ENCODE measurements at regions of chr13 and their contacts with region 1.

Region 1: DNA sequence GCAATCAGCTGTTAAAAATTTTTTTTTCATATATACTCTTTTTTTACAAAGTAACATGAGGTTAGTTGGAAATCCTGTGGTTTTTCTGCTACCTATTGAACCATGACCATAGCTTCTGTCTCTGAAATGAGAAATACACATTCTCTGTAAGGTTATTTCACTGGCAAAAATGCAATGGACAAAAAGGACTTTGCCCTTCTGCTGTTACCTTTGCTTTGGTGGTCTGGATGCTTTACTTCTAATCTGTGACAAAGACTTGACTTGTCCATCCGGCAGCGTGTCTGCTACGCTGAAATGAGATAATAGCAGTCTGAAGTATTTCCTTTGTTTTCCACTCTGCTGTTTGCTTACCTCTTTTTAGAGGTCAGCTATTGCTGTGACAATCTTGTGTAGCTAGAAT is 412.8 kb downstream of the SLITRK6 start:
- DNase-seq: peak; percentile 44
- H3K4me3 ChIP-seq: peak overlapping the region; percentile 26
- H3K27ac ChIP-seq: peak overlapping the region; percentile 58
- H3K4me1 ChIP-seq: peaks cover 59% of the 10 kb centered on the region
- CTCF ChIP-seq: no peak

Region 2: GRCh38 chr13:84934911-84935310 is 451.5 kb before region 1 on chr13:
- CTCF ChIA-PET with region 1: no interaction called
- POLR2A ChIA-PET with region 1: no interaction called
- intact Hi-C with region 1: loop called (anchors 10 kb)
- DNase-seq: peak; percentile 29
- H3K4me3 ChIP-seq: peak overlapping the region; percentile 66
- H3K27ac ChIP-seq: no peak overlapping the region
- H3K4me1 ChIP-seq: peaks cover 35% of the 10 kb centered on the region
- CTCF ChIP-seq: no peak

Region 3: GRCh38 chr13:84983321-84983720 is 403.1 kb before region 1 on chr13:
- CTCF ChIA-PET with region 1: no interaction called
- POLR2A ChIA-PET with region 1: no interaction called
- intact Hi-C with region 1: loop called (anchors 5 kb)
- DNase-seq: no peak
- H3K4me3 ChIP-seq: no peak overlapping the region
- H3K27ac ChIP-seq: no peak overlapping the region
- H3K4me1 ChIP-seq: peaks cover 39% of the 10 kb centered on the region
- CTCF ChIP-seq: peak; percentile 54

Region 4: DNA sequence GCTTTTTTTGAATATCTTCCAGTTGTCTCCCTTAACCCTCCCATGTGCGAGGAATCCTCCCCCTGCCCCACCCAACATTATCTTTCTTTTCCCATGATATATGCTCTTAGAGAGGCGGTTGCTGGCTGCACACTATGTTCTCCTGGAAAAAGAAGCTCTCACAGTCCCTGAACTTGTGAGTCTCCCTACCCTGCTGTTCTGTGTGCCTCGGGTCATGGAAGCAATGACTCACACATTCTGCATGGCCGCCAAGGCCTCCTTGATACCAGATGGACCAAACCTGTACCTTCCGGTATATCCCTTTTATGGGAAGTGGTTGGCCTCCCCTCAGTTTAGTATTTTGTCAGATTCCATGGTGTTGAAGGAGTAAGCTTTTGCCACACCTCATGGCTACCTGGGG is 292.6 kb before region 1 on chr13:
- CTCF ChIA-PET with region 1: no interaction called
- POLR2A ChIA-PET with region 1: no interaction called
- intact Hi-C with region 1: no loop called
- DNase-seq: no peak
- H3K4me3 ChIP-seq: no peak overlapping the region
- H3K27ac ChIP-seq: no peak overlapping the region
- H3K4me1 ChIP-seq: no peaks in the 10 kb centered on the region
- CTCF ChIP-seq: no peak

Region 5: GRCh38 chr13:85197431-85197830 is 189.0 kb before region 1 on chr13:
- CTCF ChIA-PET with region 1: no interaction called
- POLR2A ChIA-PET with region 1: no interaction called
- intact Hi-C with region 1: no loop called
- DNase-seq: no peak
- H3K4me3 ChIP-seq: no peak overlapping the region
- H3K27ac ChIP-seq: no peak overlapping the region
- H3K4me1 ChIP-seq: peaks cover 12% of the 10 kb centered on the region
- CTCF ChIP-seq: no peak